ENCODE measurements at regions of chr14 and their contacts with region 1.

Region 1: DNA sequence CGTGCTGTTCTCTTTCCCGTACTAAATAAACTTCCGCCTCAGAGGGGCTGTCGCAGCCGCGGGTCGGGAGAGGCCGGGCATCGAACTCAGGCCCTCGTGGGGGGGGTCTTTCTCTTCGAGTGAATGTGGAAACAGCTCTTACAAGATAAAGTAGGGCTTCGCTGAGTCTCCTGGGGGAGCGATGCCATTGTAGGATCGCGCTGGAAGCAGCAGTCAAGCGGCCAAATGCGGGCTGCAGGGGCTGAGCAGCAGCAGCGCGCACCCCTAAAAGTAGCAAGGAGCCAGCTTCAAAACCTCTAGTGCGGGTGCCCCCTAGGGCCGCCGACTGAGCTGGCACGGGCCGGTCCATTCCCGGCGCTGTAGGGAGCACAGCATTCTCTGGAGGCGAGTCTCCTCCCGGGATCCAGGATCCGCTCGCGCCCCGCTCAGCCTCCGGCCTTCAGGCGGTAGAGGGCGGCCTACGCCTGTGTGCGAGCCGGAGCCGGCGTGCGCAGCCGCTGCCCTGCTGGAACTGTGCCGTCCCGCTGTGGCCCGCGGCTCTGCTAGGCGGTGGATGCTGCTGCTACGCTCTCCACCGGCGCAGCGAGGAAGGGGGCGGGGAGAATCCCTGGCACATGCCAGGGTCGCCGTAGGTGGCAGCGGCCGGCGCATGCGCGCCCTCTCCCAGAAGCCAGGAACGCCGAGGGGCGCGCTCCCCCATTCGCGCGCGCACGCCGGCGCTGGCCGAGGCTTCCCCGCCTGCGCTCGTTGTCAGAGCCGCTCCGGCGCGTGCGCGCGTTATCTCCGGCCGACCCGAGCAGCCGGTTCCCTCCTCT is at the start of gene FUT8:
- DNase-seq: peak; percentile 90
- H3K4me3 Mint-ChIP-seq: peak within 1 kb of the TSS; percentile 95
- H3K27ac Mint-ChIP-seq: peak within 1 kb of the TSS; percentile 95
- H3K4me1 Mint-ChIP-seq: peaks cover 37% of the 10 kb centered on the region
- H3K27me3 Mint-ChIP-seq: no peaks in the 10 kb centered on the region
- total RNA-seq, gene FUT8: 110 and 124 TPM in 2 replicates

Region 2: GRCh38 chr14:65164068-65164824 is 248.0 kb before region 1 on chr14:
- intact Hi-C with region 1: loop called (anchors 1 kb)
- DNase-seq: no peak
- H3K4me3 Mint-ChIP-seq: no peak overlapping the region
- H3K27ac Mint-ChIP-seq: no peak overlapping the region
- H3K4me1 Mint-ChIP-seq: peaks cover 31% of the 10 kb centered on the region
- H3K27me3 Mint-ChIP-seq: no peaks in the 10 kb centered on the region

Region 3: DNA sequence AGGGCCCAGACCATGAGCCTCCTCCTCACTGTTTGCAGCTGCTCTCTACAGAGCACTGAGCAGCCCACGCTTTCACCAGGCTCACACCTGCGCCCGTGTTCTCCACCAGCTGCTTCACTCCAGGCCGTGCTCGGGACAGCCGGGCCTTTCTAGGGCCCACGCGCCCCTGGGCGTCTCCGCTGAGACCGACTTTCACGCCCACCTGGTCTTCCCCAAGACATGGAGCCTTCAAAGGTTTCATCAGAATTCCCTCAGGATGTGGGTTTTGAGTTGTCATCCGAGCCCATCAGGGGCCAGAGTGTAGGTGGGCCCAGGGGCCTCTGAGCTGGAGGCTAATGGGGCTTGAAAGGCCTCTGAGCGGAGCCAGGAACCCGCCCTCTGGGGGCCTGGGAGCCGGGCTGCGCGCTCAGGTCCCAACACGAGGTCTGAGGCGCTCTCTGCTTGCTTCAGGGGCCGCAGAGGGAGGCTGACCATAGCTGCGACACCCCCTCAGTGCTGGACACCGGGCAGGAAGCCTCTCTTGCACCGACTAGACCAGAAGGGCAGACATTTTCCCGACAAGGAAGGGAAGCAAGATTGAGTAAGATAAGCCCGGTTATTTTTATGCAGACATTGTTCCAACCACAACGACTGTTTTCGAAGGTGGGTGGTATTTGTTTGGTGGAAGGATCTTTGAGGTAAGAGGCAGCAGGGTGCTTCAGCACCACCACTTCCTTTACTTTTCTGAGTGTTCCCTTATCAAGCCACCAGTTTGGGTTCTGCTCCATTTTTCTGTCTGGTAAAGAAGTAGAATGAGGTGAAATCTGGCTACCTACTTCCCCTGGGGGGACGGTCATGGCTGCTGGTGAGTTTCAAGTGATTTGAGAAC is 124.7 kb before region 1 on chr14:
- intact Hi-C with region 1: loop called (anchors 1 kb)
- DNase-seq: peak; percentile 52
- H3K4me3 Mint-ChIP-seq: peak overlapping the region; percentile 62
- H3K27ac Mint-ChIP-seq: peak overlapping the region; percentile 96
- H3K4me1 Mint-ChIP-seq: peaks cover 66% of the 10 kb centered on the region
- H3K27me3 Mint-ChIP-seq: no peaks in the 10 kb centered on the region

Region 4: GRCh38 chr14:65356327-65356852 is 55.8 kb before region 1 on chr14:
- intact Hi-C with region 1: loop called (anchors 5 kb)
- DNase-seq: peak; percentile 47
- H3K4me3 Mint-ChIP-seq: peak overlapping the region; percentile 20
- H3K27ac Mint-ChIP-seq: peak overlapping the region; percentile 74
- H3K4me1 Mint-ChIP-seq: peaks cover 48% of the 10 kb centered on the region
- H3K27me3 Mint-ChIP-seq: no peaks in the 10 kb centered on the region

Region 5: DNA sequence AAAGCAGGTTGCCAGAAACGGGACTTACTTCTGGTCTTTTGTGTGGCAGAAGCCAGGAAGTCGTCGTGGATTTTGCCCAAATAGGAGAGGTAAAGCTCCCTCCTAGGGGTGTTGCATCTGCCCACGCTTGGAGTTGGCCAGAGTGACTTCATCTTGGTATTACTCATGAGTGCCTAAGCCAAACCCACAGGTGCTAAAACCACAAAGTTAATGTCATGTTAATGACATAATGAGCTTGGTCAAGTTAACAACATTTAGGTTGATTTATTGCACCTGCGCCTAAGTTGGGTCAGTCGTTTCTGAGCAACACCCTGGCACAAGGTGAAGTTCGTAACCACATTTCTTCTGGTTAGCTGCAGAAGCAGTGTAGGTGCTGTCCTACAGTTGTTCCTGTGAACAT is 225.5 kb after region 1 on chr14:
- intact Hi-C with region 1: loop called (anchors 10 kb)
- DNase-seq: peak; percentile 13
- H3K4me3 Mint-ChIP-seq: peak overlapping the region; percentile 5
- H3K27ac Mint-ChIP-seq: peak overlapping the region; percentile 31
- H3K4me1 Mint-ChIP-seq: peaks cover 35% of the 10 kb centered on the region
- H3K27me3 Mint-ChIP-seq: no peaks in the 10 kb centered on the region

Region 6: GRCh38 chr14:65847075-65847847 is 435.0 kb after region 1 on chr14:
- intact Hi-C with region 1: loop called (anchors 2 kb)
- DNase-seq: peak; percentile 79
- H3K4me3 Mint-ChIP-seq: peak overlapping the region; percentile 22
- H3K27ac Mint-ChIP-seq: peak overlapping the region; percentile 80
- H3K4me1 Mint-ChIP-seq: peaks cover 66% of the 10 kb centered on the region
- H3K27me3 Mint-ChIP-seq: no peaks in the 10 kb centered on the region